ENCODE measurements at regions of chr14 and their contacts with region 1.

Region 1: GRCh38 chr14:88667555-88668273 is 104.9 kb downstream of the ZC3H14 start:
- DNase-seq: peak; percentile 67 to 78
- ATAC-seq: peak; percentile 90 to 96
- H3K4me3 ChIP-seq: no peak overlapping the region
- H3K27ac ChIP-seq: no peak overlapping the region
- H3K4me1 ChIP-seq: no peaks in the 10 kb centered on the region
- CTCF ChIP-seq: peak; percentile 87
- EP300 ChIP-seq: no peak
- POLR2A ChIP-seq: no peak
- RAD21 ChIP-seq: peak; percentile 85 to 90

Region 2: DNA sequence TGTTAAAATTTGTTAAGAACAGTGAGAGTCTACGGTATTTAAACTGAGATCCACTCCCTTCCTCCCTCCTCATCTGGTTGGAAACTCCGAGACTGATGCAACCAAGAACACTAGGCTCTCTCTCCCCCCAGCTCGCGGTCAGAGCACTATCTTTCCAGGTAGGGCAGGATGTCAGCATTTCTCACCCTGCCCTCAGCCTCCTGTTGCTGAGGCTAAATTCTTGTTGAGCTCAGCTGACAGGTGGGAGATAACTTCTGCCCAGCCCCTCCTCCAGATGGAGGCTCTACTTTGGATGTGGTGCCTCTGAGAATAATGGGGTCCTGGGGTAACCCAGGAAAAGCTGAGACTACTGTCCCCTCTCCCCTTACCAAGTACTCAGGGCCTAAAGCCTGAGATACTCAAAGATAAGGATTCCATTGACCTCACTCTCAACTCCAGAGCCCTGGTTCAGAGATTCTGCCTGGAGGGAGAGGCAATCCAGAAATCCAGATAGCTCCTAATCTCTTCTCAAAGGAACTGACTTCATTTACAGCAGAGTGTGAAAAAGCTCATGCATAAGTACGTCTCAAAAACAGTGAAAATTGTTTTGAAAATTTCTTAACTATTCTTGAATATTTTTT is 14.9 kb after region 1 on chr14:
- CTCF ChIA-PET with region 1: interaction called, 21 read pairs
- POLR2A ChIA-PET with region 1: no interaction called
- DNase-seq: no peak
- ATAC-seq: no peak
- H3K4me3 ChIP-seq: no peak overlapping the region
- H3K27ac ChIP-seq: no peak overlapping the region
- H3K4me1 ChIP-seq: no peaks in the 10 kb centered on the region
- CTCF ChIP-seq: no peak
- EP300 ChIP-seq: no peak
- POLR2A ChIP-seq: no peak
- RAD21 ChIP-seq: no peak

Region 3: DNA sequence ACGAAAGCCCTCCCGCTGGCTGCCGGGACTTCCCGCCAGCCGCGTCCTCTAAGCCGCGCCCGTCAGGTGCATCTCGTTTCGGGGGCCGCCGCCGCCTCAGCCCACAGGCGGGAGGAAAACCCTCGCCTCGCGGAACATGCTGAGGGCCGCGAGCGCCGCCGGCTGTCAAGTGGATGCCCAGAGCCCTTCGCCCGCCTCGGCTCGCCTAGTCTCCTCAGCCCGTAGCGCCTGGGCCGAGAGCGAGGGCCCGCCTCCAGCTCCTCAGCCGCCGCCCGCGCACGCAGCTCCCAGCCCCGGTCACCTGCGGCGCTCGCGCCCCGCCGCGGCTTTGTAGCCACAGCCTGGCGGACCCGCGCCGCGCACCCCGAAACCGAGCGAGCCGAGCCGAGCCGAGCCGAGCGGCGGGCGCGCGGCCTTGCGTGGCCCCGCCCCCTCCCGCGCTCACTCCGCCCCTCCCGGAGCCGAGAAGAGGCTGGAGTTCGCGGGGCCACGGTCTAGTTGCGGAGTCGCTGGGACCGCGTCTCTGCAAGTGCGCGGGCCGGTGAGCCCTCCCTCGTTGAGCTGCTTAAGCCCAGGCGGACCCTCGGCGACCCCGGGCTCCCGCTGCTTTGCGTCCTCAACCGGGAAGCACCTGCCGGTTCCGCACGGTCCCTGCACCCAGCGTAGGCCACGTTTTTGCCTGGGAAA is 125.0 kb after region 1 on chr14 and contains the start of gene EML5:
- CTCF ChIA-PET with region 1: interaction called, 19 read pairs
- POLR2A ChIA-PET with region 1: no interaction called
- DNase-seq: peak; percentile 54 to 63
- ATAC-seq: peak; percentile 94 to 96
- H3K4me3 ChIP-seq: peak within 1 kb of the TSS; percentile 62
- H3K27ac ChIP-seq: peak within 1 kb of the TSS; percentile 62 to 81
- H3K4me1 ChIP-seq: 0 out of 3 replicates have a peak, but pooled peaks cover 5% of the 10 kb centered on the region
- CTCF ChIP-seq: peak; percentile 37; the same call in 2 of the 3 replicates
- EP300 ChIP-seq: no peak
- POLR2A ChIP-seq: peak; percentile 46; the same call in 1 of the 2 replicates
- RAD21 ChIP-seq: peak in 1 of 2 experiments; percentile 58; a peak in 3 of 5 replicates
- polyA plus RNA-seq, gene EML5: 0.40 and 0.62 TPM in 2 replicates

Region 4: DNA sequence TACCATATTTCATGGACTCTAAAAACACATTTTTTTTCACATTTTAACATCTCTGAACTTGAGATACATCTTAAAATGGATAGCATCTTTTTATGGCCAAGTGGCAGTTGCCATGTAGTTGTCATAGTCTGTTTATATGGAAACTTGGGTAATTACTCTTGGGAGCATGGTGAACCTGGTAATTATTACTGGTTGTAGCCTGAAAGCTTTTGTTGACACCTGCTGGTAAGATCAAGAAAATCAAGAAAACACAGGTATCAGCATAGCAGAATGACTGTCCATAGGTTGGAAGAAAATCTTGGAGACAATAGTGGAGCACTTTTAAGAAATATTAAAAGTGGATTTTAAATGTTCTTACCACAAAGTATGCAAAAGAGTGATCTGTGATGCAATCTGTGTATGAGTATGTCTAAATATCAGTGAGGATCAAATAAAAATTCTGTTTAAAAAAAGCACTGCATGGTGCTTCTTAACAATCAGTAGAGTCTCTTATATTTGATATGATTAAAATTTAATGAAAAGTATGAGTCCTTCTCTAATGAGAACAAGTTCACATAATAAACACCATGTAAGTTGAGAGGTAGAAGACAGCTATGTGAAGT is 200.9 kb after region 1 on chr14:
- CTCF ChIA-PET with region 1: interaction called, 12 read pairs
- POLR2A ChIA-PET with region 1: no interaction called
- DNase-seq: peak in 1 of 2 experiments; percentile 23
- ATAC-seq: peak; percentile 56 to 70; a peak in 2 of 6 replicates
- H3K4me3 ChIP-seq: no peak overlapping the region
- H3K27ac ChIP-seq: no peak overlapping the region
- H3K4me1 ChIP-seq: no peaks in the 10 kb centered on the region
- CTCF ChIP-seq: peak; percentile 47
- EP300 ChIP-seq: no peak
- POLR2A ChIP-seq: no peak
- RAD21 ChIP-seq: peak; percentile 49 to 56

Region 5: DNA sequence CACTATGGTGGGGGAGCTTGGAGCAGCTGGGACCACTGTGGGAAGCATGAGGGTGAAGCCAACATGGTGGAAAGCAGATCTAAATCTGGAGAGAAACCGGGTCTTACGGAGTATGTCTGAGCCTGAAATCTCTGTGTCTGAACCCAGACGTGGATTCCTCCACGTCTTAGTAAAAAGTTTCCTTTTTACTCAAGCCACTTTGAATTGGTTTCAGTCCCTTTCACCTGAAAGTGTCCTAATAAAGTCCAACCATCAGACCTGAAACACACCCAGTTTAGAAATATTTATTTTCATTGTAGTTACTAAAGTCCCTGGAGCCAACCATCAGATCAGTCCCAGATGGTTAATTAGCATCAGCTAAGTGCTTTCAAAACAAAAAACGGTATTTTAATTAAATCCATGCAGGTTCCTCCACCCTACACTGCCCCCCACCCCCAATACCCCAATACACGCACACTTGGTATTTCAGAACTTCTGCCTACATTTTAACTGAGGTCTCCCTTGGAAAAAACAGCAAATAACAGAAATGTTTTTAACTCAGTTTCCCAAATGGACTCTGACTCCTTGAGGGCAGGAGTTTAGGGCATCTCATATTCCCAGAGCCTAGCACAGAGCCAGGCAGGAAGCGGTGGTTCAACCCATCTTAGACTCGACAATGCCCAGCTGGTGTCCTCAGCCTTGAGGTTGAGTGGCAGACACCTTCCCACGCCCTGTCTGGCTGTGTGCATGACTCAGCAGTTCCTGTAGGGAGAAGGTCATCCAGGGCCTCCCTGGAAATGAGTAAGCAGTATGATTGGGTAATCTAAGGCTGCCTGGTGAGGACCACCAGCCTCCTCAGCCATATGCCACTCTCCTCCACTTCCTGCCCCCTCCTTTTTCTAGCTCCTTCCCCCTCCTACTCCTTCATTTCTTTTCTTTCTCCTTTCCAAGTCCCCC is 332.6 kb after region 1 on chr14:
- CTCF ChIA-PET with region 1: interaction called, 10 read pairs
- POLR2A ChIA-PET with region 1: no interaction called
- DNase-seq: peak; percentile 81 to 96
- ATAC-seq: peak; percentile 92 to 94
- H3K4me3 ChIP-seq: no peak overlapping the region
- H3K27ac ChIP-seq: peak overlapping the region; percentile 93 to 96
- H3K4me1 ChIP-seq: peaks cover 36% of the 10 kb centered on the region
- CTCF ChIP-seq: no peak
- EP300 ChIP-seq: peak; percentile 82 to 86; a peak in 3 of 5 replicates
- POLR2A ChIP-seq: no peak
- RAD21 ChIP-seq: peak in 1 of 2 experiments; percentile 24; a peak in 1 of 5 replicates

Region 6: DNA sequence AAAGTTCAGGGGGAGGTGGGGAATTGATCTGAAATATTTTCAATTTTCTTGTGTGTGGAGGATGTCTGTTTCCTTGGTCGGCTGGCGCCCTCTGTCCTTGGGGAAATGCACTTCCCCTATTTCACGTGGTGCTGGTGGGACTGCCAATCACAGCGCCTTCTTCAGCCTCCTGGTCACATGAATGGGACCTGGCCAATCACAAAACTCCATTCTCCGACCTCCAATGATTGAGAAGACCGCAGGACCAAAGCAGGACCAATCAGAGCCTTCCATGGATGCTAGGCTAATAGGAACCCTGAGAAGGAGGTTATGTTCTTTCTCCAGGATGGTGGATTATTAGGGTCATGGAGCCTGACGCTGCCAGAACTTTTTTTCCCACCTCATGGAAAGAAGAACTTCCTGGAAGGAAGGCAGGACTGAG is 345.4 kb after region 1 on chr14:
- CTCF ChIA-PET with region 1: interaction called, 24 read pairs
- POLR2A ChIA-PET with region 1: no interaction called
- DNase-seq: peak; percentile 60 to 87
- ATAC-seq: peak; percentile 83 to 91
- H3K4me3 ChIP-seq: peak overlapping the region; percentile 31
- H3K27ac ChIP-seq: peak overlapping the region; percentile 49 to 71; a peak in 4 of 6 replicates
- H3K4me1 ChIP-seq: peaks cover 9% of the 10 kb centered on the region
- CTCF ChIP-seq: peak; percentile 47; the same call in 2 of the 3 replicates
- EP300 ChIP-seq: no peak
- POLR2A ChIP-seq: no peak
- RAD21 ChIP-seq: peak; percentile 72 to 82